ENCODE measurements at regions of chr9 and their contacts with region 1.

Region 1: GRCh38 chr9:17330097-17330496 is 195.3 kb downstream of the CNTLN start:
- DNase-seq: no peak
- ATAC-seq: no peak
- H3K4me3 ChIP-seq: no peak overlapping the region
- H3K27ac ChIP-seq: no peak overlapping the region
- H3K4me1 ChIP-seq: no peaks in the 10 kb centered on the region
- H3K27me3 ChIP-seq: no peaks in the 10 kb centered on the region
- CTCF ChIP-seq: no peak
- POLR2A ChIP-seq: no peak

Region 2: DNA sequence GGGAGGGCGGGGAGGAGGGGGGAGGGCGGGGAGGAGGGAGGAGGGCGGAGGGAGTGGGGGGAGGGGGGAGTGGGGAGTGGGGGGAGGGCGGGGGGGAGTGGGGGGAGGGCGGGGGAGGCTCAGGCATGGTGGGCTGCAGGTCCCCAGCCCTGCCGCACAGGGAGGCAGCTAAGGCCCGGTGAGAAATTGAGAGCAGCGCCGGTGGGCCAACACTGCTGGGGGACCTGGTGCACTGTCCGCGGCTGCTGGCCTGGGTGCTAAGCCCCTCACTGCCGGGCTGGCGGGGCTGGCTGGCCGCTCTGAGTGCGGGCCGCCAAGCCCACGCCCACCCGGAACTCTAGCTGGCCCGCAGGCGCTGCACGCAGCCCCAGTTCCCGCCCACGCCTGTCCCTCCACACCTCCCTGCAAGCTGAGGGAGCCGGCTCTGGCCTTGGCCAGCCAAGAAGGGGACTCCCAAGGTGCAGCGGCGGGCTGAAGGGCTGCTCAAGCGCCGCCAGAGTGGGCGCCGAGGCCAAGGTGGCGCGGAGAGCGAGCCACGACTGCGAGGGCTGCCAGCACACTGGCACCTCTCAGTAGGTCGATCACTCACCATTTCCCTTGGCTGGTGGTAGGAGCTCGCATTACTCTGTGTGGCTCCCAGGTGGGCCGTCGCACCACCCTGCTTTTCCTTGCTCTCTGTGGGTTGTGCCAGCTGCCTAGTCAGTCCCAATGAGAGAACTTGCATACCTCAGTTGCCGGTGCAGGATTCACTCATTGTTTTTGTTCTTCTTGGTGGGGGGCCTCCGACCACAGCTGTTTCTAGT is 35.1 kb before region 1 on chr9:
- intact Hi-C with region 1: loop called in 1 of 10 experiments (anchors 2 kb)
- DNase-seq: no peak
- ATAC-seq: no peak
- H3K4me3 ChIP-seq: no peak overlapping the region
- H3K27ac ChIP-seq: no peak overlapping the region
- H3K4me1 ChIP-seq: no peaks in the 10 kb centered on the region
- H3K27me3 ChIP-seq: no peaks in the 10 kb centered on the region
- CTCF ChIP-seq: no peak
- POLR2A ChIP-seq: no peak

Region 3: GRCh38 chr9:17342696-17343095 is 12.6 kb after region 1 on chr9:
- intact Hi-C with region 1: no loop called
- DNase-seq: no peak
- ATAC-seq: no peak
- H3K4me3 ChIP-seq: no peak overlapping the region
- H3K27ac ChIP-seq: no peak overlapping the region
- H3K4me1 ChIP-seq: no peaks in the 10 kb centered on the region
- H3K27me3 ChIP-seq: no peaks in the 10 kb centered on the region
- CTCF ChIP-seq: no peak
- POLR2A ChIP-seq: no peak

Measured in heart left ventricle (tissue), 16 donors.